ENCODE measurements at regions of chr21 and their contacts with region 1.

Region 1: DNA sequence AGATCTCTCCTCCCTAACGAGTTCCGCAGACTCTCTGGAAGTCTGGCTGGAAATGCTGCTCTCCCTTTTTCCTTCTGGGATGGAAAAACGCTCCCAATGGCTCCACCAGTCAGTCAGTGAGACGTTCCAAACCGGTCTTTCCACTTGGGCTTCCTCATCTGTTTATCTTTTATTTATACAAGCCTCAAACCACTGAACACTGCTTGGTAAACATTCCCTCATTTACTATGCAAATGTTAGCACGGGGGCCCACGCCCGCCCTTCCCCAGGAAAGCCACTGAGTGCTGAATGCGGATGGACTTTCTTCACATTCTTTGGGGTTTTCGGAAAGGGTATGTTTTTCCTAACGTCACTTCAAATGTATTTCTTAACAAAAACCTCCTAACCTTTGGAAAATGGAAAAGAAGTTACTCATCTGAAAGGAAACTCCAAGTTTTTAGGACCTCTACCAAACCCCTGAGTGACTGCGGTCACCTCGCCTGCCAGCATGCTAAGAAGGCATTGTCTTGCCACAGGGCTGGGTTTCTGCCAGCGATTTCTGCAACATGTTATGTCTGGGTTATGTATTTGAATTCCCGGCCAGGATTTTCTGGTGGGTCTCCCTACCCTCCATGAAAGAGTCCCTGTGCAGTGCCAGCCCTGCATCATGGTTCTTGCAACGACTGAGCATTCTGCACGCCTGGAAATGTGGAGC is 14.0 kb upstream of the UMODL1 start:
- DNase-seq: peak; percentile 84 to 86
- H3K4me3 ChIP-seq: peak overlapping the region; percentile 30
- H3K4me3 Mint-ChIP-seq: peak overlapping the region; percentile 70
- H3K27ac Mint-ChIP-seq: peak overlapping the region; percentile 85
- H3K4me1 ChIP-seq: peaks cover 52% of the 10 kb centered on the region
- H3K4me1 Mint-ChIP-seq: peaks cover 27% of the 10 kb centered on the region
- H3K27me3 ChIP-seq: no peaks in the 10 kb centered on the region
- H3K27me3 Mint-ChIP-seq: no peaks in the 10 kb centered on the region
- CTCF ChIP-seq: no peak

Region 2: GRCh38 chr21:40166291-40166850 is 1890.8 kb before region 1 on chr21:
- CTCF ChIA-PET with region 1: no interaction called
- POLR2A ChIA-PET with region 1: no interaction called
- intact Hi-C with region 1: no loop called
- DNase-seq: no peak
- H3K4me3 ChIP-seq: no peak overlapping the region
- H3K4me3 Mint-ChIP-seq: no peak overlapping the region
- H3K27ac Mint-ChIP-seq: no peak overlapping the region
- H3K4me1 ChIP-seq: no peaks in the 10 kb centered on the region
- H3K4me1 Mint-ChIP-seq: no peaks in the 10 kb centered on the region
- H3K27me3 ChIP-seq: no peaks in the 10 kb centered on the region
- H3K27me3 Mint-ChIP-seq: peaks cover 10% of the 10 kb centered on the region
- CTCF ChIP-seq: no peak

Region 3: DNA sequence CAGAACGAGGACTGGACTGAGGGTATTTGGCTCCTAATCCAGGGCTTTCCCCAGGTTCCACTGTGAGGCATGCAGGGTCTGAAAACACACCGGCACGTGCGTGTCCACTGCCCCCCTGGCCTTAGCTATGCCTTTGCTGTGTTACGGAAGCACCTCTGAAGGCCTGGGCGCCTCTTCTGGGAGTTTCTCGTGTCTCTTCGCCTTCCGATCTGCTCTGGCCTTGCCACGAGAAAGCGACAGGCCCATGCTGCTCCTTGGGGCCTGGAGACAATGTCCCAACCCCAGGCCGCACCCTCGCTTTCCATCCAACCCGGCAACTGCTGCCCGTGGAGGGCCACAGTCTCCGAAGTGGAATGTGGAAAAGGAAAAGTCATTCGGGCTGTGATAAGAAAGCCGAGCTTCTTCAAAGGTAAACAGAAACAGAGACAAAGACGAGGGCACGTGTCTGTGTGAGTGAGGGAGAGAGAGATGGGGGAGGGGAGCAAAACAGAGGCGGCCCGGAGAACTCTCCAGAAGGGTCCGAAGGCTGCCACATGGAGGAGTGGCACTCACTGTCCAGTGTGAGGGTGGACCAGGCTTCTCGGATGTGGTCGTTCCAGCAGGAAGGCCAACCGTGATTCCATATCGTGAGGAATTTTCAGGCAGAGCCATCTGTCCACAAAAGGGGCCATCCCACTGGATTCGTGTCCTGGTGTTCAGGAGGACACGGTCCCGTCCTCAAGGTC is 10.6 kb after region 1 on chr21:
- CTCF ChIA-PET with region 1: no interaction called
- POLR2A ChIA-PET with region 1: no interaction called
- intact Hi-C with region 1: loop called (anchors 1 kb)
- DNase-seq: peak; percentile 47 to 60
- H3K4me3 ChIP-seq: no peak overlapping the region
- H3K4me3 Mint-ChIP-seq: no peak overlapping the region
- H3K27ac Mint-ChIP-seq: peak overlapping the region; percentile 85
- H3K4me1 ChIP-seq: peaks cover 24% of the 10 kb centered on the region
- H3K4me1 Mint-ChIP-seq: peaks cover 14% of the 10 kb centered on the region
- H3K27me3 ChIP-seq: no peaks in the 10 kb centered on the region
- H3K27me3 Mint-ChIP-seq: no peaks in the 10 kb centered on the region
- CTCF ChIP-seq: no peak

Region 4: DNA sequence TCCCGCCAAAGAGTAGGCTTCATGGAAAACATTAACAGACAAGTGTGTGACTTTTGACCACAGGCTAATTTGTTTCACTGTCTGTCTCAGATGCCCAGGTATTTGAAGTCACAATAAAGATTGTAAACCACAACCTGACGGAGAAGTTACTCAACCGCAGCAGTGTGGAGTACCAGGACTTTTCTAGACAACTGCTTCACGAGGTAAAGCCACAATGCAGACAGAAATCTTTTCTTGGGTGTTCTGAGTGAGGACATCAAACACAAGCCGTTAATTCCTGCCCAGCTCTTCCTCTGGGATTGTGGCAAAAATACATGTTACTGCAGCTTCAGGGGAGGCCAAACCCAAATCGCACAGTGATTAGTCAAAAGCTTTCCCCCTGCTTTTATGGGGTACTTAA is 44.9 kb after region 1 on chr21:
- CTCF ChIA-PET with region 1: no interaction called
- POLR2A ChIA-PET with region 1: no interaction called
- intact Hi-C with region 1: loop called (anchors 2 kb)
- DNase-seq: peak in 1 of 2 experiments; percentile 15
- H3K4me3 ChIP-seq: no peak overlapping the region
- H3K4me3 Mint-ChIP-seq: no peak overlapping the region
- H3K27ac Mint-ChIP-seq: peak overlapping the region; percentile 88
- H3K4me1 ChIP-seq: peaks cover 70% of the 10 kb centered on the region
- H3K4me1 Mint-ChIP-seq: peaks cover 40% of the 10 kb centered on the region
- H3K27me3 ChIP-seq: no peaks in the 10 kb centered on the region
- H3K27me3 Mint-ChIP-seq: no peaks in the 10 kb centered on the region
- CTCF ChIP-seq: no peak

Region 5: DNA sequence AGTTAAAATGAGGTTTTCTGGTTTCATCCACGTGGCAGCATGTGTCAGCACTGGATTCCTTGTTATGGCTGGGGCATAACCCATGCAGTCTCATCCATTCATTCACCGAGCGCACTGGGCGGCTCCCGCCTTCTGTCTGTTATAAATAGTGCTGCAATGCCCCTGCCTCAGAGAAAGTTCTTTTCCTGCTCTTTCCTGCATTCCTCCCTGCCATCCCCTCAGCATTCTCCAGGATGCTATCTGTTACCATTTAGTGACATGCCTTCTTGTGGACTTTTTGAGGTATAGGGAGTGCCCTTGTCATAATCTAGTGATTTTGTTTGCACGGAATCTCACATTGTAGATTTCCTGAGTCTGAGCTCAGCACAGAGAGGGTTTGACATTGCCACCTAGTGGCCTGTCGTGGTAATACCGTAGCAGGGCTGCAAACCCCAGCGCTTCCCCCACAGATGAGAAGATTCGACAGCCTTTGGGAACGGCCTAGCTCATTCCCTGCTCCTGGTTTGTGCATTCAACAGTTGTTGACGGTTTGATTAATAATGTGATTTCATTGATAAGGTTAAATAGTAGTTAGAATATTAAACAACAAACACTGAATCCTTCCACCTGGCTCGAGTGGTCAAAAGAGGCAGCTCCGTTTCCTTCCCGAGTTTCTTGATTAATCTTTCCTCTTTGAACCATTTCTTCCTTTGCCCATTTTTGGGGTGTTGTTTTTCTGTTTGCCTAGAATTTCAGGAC is 60.3 kb after region 1 on chr21:
- CTCF ChIA-PET with region 1: no interaction called
- POLR2A ChIA-PET with region 1: no interaction called
- intact Hi-C with region 1: loop called (anchors 2 kb)
- DNase-seq: peak; percentile 66 to 79
- H3K4me3 ChIP-seq: no peak overlapping the region
- H3K4me3 Mint-ChIP-seq: no peak overlapping the region
- H3K27ac Mint-ChIP-seq: no peak overlapping the region
- H3K4me1 ChIP-seq: peaks cover 20% of the 10 kb centered on the region
- H3K4me1 Mint-ChIP-seq: peaks cover 20% of the 10 kb centered on the region
- H3K27me3 ChIP-seq: no peaks in the 10 kb centered on the region
- H3K27me3 Mint-ChIP-seq: no peaks in the 10 kb centered on the region
- CTCF ChIP-seq: peak; percentile 87 to 89